AG04450 (cell line): ENCODE measurements at regions of chr12 and their contacts with region 1.

Region 1: GRCh38 chr12:64551698-64552097 is 58.6 kb upstream of the RASSF3 start:
- DNase-seq: no peak
- H3K4me3 ChIP-seq: no peak overlapping the region
- H3K27ac ChIP-seq: no peak overlapping the region
- H3K27me3 ChIP-seq: no peaks in the 10 kb centered on the region
- CTCF ChIP-seq: no peak

Region 2: DNA sequence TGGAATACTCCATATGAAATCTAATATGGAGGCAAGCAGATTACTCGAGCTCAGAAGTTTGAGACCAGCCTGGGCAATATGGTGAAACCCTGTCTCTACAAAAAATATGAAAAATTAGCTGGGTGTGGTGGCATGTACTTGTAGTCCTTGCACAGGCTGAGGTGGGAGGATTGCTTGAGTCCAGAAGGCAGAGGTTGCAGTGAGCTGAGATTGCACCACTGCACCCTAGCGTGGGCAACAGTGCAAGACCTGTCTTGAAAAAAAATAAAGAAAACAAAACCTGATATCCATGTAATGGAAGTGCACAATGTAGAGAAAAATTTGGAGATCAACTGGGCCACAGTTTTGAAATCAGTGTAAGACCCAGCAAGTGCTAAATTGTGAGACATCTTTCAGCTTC is 178.5 kb before region 1 on chr12:
- CTCF ChIA-PET with region 1: no interaction called
- POLR2A ChIA-PET with region 1: no interaction called
- DNase-seq: no peak
- H3K4me3 ChIP-seq: no peak overlapping the region
- H3K27ac ChIP-seq: no peak overlapping the region
- H3K27me3 ChIP-seq: no peaks in the 10 kb centered on the region
- CTCF ChIP-seq: no peak

Region 3: GRCh38 chr12:64469455-64470142 is 82.1 kb before region 1 on chr12:
- CTCF ChIA-PET with region 1: no interaction called
- POLR2A ChIA-PET with region 1: no interaction called
- DNase-seq: no peak
- H3K4me3 ChIP-seq: no peak overlapping the region
- H3K27ac ChIP-seq: no peak overlapping the region
- H3K27me3 ChIP-seq: no peaks in the 10 kb centered on the region
- CTCF ChIP-seq: no peak

Region 4: DNA sequence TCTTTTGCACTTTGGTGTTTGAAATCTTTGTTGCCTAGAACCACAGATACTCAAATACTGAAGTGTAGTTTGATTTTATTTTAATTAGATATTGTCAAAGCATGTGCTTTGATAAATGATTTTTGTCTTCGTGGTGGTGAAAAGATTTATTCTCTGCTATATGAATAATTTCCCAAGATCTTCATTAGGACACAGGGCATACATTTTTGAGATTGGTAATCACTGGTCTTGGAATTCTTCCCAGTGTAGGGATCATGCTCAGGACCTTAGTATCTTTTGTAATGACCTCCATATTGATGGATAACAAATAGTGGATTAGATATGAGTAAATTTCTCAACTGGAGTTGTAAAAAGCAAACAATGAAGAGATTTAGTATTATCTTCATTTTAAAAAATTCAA is 71.5 kb before region 1 on chr12:
- CTCF ChIA-PET with region 1: no interaction called
- POLR2A ChIA-PET with region 1: no interaction called
- DNase-seq: no peak
- H3K4me3 ChIP-seq: no peak overlapping the region
- H3K27ac ChIP-seq: no peak overlapping the region
- H3K27me3 ChIP-seq: no peaks in the 10 kb centered on the region
- CTCF ChIP-seq: no peak

Region 5: GRCh38 chr12:64528616-64529015 is 23.1 kb before region 1 on chr12:
- CTCF ChIA-PET with region 1: interaction called, 10 read pairs
- POLR2A ChIA-PET with region 1: no interaction called
- DNase-seq: no peak
- H3K4me3 ChIP-seq: no peak overlapping the region
- H3K27ac ChIP-seq: no peak overlapping the region
- H3K27me3 ChIP-seq: no peaks in the 10 kb centered on the region
- CTCF ChIP-seq: no peak

Region 6: DNA sequence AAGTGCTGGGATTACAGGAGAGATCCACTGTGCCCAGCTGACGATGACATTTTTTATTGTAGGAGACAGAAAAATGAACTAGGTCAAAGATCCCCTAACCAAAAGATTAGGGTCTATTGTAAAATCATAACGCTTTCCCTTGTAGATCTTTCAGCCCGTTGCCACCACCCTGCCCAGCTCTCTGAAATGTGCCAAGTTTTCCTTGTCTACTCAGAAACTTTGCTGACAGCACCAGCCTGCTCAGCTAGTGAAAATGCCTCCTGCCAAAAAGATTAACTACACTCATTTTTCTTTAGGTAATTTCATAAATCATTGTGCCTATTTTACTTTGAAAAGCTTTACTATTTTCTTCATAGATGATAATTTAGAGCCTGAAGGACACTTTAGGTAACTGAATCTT is 30.4 kb after region 1 on chr12:
- CTCF ChIA-PET with region 1: interaction called, 16 read pairs
- POLR2A ChIA-PET with region 1: no interaction called
- DNase-seq: no peak
- H3K4me3 ChIP-seq: no peak overlapping the region
- H3K27ac ChIP-seq: no peak overlapping the region
- H3K27me3 ChIP-seq: no peaks in the 10 kb centered on the region
- CTCF ChIP-seq: no peak

Region 7: DNA sequence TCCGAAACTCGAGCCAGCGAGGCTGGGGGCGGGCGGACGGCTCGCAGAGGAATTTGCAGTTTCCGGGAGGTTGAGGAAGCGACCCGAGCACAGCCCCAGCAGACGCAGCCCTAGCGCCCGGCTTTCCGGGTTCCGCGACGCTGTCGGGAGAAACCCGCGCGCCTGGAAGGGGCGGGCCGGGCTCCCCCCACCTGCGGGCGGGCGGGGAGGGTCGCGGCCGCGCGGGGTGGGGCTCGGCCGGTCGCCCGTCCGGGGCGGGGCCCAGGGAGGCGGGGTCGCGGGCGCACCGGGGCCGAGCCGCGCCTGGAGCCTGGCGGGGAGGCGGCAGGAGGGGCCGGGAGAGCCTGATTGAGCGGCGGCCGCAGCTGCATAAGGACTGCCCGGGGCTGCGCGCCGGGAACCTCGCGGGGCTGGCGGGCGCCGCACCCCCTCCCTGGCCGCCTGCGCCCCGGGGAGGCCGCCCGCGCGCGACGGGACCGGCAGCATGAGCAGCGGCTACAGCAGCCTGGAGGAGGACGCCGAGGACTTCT is 58.5 kb after region 1 on chr12 and contains the start of gene RASSF3:
- CTCF ChIA-PET with region 1: interaction called, 41 read pairs
- POLR2A ChIA-PET with region 1: no interaction called
- DNase-seq: no peak
- H3K4me3 ChIP-seq: peak within 1 kb of the TSS; percentile 90
- H3K27ac ChIP-seq: peak within 1 kb of the TSS; percentile 82
- H3K27me3 ChIP-seq: no peaks in the 10 kb centered on the region
- CTCF ChIP-seq: no peak
- polyA plus RNA-seq, gene RASSF3: 46.7 and 49.8 TPM in 2 replicates

Region 8: DNA sequence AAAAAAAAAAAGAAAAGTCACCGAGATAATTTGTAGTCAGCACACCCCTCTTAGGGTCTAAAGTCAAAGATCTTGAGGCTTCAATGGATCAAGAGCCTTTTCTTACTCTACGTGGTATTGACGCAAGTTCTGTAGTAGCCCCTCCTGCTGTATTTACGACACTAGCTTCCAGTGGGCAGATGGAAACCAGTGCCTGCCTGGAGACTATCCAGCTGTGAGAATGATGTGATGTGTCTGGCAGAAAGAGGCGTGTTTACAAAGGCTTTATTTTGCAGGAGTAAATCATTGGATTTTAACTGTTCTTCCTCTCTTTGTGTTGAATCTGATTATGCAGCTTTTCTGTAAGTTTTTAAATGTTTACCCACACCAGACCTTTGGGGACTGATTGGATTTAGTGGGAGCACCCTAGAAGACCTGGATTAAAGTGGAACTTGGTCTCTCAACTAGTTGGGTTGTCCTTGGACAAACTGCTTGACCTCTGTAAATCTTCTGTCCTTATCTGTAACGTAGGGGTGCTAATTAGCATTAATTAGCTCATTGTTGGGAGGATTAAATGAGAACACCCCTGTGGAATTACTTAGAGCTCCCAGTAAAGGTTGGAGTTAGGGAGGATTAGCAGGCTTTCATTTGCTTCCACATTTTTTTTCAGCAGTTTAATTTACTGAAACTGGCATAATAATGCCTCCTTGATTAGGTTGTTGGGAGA is 131.0 kb after region 1 on chr12:
- CTCF ChIA-PET with region 1: interaction called, 230 read pairs
- POLR2A ChIA-PET with region 1: no interaction called
- DNase-seq: peak; percentile 78
- H3K4me3 ChIP-seq: no peak overlapping the region
- H3K27ac ChIP-seq: no peak overlapping the region
- H3K27me3 ChIP-seq: no peaks in the 10 kb centered on the region
- CTCF ChIP-seq: no peak

Region 9: GRCh38 chr12:64796208-64796845 is 244.6 kb after region 1 on chr12:
- CTCF ChIA-PET with region 1: interaction called, 27 read pairs
- POLR2A ChIA-PET with region 1: no interaction called
- DNase-seq: peak; percentile 66
- H3K4me3 ChIP-seq: no peak overlapping the region
- H3K27ac ChIP-seq: no peak overlapping the region
- H3K27me3 ChIP-seq: peaks cover 22% of the 10 kb centered on the region
- CTCF ChIP-seq: peak; percentile 83